ENCODE measurements at regions of chr10 and their contacts with region 1.

Region 1: GRCh38 chr10:100621360-100622205 is 85.8 kb downstream of the HIF1AN start:
- DNase-seq: peak; percentile 54

Region 2: DNA sequence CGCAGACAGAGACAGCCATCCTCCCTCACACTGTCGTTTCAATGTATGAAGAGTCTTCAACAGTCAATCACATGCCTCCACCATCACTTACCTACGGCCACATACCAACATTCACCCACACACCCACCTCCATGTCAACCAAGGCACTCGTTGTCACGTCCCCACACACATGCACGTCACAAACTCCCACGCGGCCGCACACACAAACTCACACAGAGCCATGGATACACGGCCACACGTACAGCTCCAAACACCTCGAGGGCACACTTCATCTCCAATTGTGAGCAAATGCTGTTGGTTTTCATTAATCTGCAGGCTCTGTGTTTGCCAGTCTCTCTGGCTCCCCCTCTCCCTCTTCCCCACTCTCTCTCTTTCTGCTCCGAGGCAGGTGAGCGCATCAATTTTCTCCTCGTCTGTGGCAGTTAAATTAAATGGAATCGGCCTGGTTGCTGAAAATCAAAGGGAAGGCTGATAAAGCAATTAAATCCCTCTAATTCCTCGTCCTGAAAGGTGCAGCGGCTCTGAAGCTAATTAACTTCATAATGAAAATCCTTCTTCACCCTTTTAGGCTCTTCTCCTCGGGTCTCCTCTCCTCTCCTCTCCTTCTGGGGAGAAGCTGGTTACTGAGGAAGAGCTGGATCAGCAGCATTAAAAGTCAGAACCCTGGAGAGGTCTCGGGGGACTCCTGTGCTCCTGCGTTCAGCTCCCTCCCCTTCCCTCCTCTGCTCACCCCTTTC is 237.3 kb after region 1 on chr10:
- intact Hi-C with region 1: loop called in 1 of 2 experiments (anchors 5 kb)
- DNase-seq: no peak